ENCODE measurements at regions of chr3 and their contacts with region 1.

Region 1: GRCh38 chr3:108088697-108089096 is 2.1 kb downstream of the CD47 start:
- DNase-seq: no peak
- H3K4me3 ChIP-seq: no peak overlapping the region
- H3K27me3 ChIP-seq: no peaks in the 10 kb centered on the region
- CTCF ChIP-seq: no peak

Region 2: DNA sequence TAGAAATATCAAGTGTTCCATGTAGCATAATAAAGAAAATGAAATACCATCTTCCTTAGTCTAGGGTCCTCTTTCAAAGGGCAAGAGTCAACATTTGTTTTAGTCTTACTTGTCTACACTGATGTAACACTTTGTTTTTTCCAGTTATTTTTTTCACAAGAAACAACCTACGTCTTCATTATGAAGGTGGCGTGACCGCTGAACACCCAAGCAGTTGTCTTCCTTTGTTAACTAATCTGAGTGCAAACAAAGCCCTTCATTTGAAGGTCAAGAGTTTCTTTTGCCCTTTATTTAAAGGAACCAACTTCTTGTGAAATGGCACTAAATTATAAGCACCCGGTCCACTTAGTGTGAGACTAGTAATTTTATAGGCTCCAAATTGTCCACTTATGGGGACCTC is 71.1 kb before region 1 on chr3:
- CTCF ChIA-PET with region 1: no interaction called
- POLR2A ChIA-PET with region 1: no interaction called
- DNase-seq: no peak
- H3K4me3 ChIP-seq: no peak overlapping the region
- H3K27me3 ChIP-seq: 0 out of 2 replicates have a peak, but pooled peaks cover 1% of the 10 kb centered on the region
- CTCF ChIP-seq: no peak

Region 3: DNA sequence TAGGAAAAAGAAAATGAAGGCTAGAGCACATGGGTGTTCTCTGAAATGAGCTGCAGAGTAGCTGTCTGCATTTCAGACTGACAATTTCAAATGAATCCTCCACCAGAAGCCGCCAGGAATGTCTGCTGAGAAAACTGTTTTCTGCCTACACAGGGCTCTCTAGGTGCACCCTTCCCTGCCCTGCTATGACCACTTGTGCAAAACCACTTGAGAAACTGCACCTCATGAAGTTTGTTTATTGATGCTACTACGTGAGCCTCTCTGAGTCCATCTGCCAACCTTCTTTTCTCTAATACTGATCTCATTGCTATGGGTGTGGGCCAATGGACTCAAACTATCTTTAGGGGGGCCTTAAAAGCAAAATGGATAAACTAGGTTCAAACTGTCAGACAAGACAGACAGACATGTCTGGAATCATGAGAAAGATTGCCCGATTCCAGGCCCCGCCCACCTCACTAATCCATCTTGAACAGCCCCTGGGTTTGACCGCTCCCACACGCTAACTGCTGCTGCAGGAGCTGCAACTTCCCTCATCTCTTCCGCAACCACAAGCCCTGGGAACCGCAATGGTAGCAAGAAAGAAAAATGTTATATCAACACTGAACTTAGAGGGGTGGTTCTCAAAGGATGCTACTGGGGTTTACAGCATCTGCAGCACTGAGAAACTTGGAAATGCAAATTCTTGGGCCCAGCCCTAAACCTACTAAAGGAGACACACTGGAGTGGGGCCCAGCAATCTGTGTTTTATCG is 11.2 kb after region 1 on chr3:
- CTCF ChIA-PET with region 1: interaction called, 3 read pairs
- POLR2A ChIA-PET with region 1: interaction called, 18 read pairs
- DNase-seq: no peak
- H3K4me3 ChIP-seq: no peak overlapping the region
- H3K27me3 ChIP-seq: no peaks in the 10 kb centered on the region
- CTCF ChIP-seq: no peak

Measured in BJ (cell line).